ENCODE measurements at regions of chr6 and their contacts with region 1.

Region 1: DNA sequence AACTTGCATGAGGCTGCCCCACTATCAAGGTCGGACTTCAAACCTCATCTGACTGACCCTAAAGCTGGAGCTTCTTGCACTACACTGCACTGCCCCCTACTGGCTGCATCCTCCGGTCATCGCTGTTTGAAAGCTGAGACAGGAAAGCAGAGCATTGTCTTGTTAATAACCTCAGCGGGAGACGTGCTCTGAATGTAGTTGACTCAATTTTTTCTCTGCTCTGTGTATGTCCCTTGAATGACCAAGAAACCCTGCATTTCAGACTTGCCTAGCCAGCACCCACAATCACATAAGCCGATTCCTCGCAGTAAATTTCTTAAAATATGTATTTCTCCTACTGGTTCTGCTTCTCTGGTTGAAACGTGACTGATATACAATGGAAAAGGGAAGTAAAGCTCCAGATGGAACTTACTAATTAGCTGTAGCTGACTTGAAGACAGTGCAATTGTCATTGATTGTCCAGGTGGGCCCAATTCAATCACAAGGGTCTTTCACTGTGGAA is 27.8 kb downstream of the TCF21 start:
- DNase-seq: peak; percentile 21 to 79 (median 70)
- ATAC-seq: peak; percentile 52
- H3K4me3 ChIP-seq: no peak overlapping the region
- H3K4me3 Mint-ChIP-seq: no peak overlapping the region
- H3K27ac ChIP-seq: no peak overlapping the region
- H3K27ac Mint-ChIP-seq: no peak overlapping the region
- H3K4me1 ChIP-seq: peaks cover 5% of the 10 kb centered on the region
- H3K4me1 Mint-ChIP-seq: peaks cover 3% of the 10 kb centered on the region
- H3K27me3 ChIP-seq: no peaks in the 10 kb centered on the region
- H3K27me3 Mint-ChIP-seq: peaks cover 13% of the 10 kb centered on the region
- CTCF ChIP-seq: peak; percentile 71

Region 2: GRCh38 chr6:132820629-132821381 is 1095.9 kb before region 1 on chr6:
- CTCF ChIA-PET with region 1: no interaction called
- POLR2A ChIA-PET with region 1: no interaction called
- intact Hi-C with region 1: loop called in 1 of 2 experiments (anchors 10 kb)
- DNase-seq: peak in 1 of 9 experiments; percentile 16
- ATAC-seq: no peak
- H3K4me3 ChIP-seq: no peak overlapping the region
- H3K4me3 Mint-ChIP-seq: no peak overlapping the region
- H3K27ac ChIP-seq: peak overlapping the region in 1 of 2 experiments; percentile 44
- H3K27ac Mint-ChIP-seq: peak overlapping the region; percentile 81
- H3K4me1 ChIP-seq: peaks cover 25% of the 10 kb centered on the region
- H3K4me1 Mint-ChIP-seq: peaks cover 55% of the 10 kb centered on the region
- H3K27me3 ChIP-seq: no peaks in the 10 kb centered on the region
- H3K27me3 Mint-ChIP-seq: no peaks in the 10 kb centered on the region
- CTCF ChIP-seq: no peak

Region 3: GRCh38 chr6:132962936-132963868 is 953.5 kb before region 1 on chr6:
- CTCF ChIA-PET with region 1: no interaction called
- POLR2A ChIA-PET with region 1: no interaction called
- intact Hi-C with region 1: loop called in 1 of 2 experiments (anchors 5 kb)
- DNase-seq: peak; percentile 5 to 58 (median 38)
- ATAC-seq: peak; percentile 44
- H3K4me3 ChIP-seq: no peak overlapping the region
- H3K4me3 Mint-ChIP-seq: no peak overlapping the region
- H3K27ac ChIP-seq: no peak overlapping the region
- H3K27ac Mint-ChIP-seq: no peak overlapping the region
- H3K4me1 ChIP-seq: no peaks in the 10 kb centered on the region
- H3K4me1 Mint-ChIP-seq: no peaks in the 10 kb centered on the region
- H3K27me3 ChIP-seq: no peaks in the 10 kb centered on the region
- H3K27me3 Mint-ChIP-seq: peaks cover 29% of the 10 kb centered on the region
- CTCF ChIP-seq: peak; percentile 70

Region 4: DNA sequence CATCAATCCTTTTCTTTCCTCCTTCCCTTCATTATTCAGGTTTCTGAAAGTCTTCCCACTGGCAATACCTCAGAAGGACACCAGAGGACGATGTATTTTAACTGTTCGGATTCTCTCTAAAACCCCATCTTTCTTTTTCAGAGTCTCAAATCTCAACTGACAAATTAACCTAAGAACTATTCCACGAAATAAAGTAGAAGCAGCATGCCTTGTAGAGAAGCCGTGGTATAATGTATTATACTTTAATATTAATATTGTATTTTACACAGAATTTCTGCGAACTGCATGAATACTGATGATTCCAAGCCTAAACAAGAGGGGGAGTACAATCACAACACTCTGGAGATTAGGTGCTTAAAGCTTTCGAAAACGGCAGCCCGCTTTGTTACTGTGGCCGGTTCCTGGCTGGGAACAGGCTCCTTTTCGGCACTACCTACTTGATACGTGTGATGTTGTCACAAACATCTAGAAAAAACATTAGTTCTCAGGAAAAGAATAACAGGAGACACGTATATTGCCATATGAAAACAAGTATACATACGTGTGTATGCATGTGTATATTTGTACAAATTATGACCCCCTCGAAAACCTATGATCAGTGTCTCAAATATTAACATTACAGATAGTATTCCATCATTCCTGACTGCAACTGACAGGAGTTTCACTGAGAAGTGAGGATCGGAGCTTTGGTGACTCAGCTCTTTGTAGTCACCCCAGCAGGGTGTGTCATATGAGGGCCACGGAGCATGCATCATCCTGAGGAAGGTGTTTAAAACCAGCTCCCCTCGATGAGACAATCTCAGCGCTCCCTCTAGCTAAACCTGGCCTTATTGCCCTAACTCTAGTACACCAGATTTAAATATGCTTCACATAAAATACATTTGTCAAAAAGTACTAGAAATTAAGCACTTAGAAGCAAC is 347.5 kb before region 1 on chr6:
- CTCF ChIA-PET with region 1: interaction called, 5 read pairs
- POLR2A ChIA-PET with region 1: no interaction called
- intact Hi-C with region 1: loop called (anchors 5 kb)
- DNase-seq: peak in 2 of 9 experiments; percentile 12 to 33
- ATAC-seq: no peak
- H3K4me3 ChIP-seq: no peak overlapping the region
- H3K4me3 Mint-ChIP-seq: peak overlapping the region; percentile 44
- H3K27ac ChIP-seq: no peak overlapping the region
- H3K27ac Mint-ChIP-seq: no peak overlapping the region
- H3K4me1 ChIP-seq: no peaks in the 10 kb centered on the region
- H3K4me1 Mint-ChIP-seq: peaks cover 6% of the 10 kb centered on the region
- H3K27me3 ChIP-seq: peaks cover 0 to 3% of the 10 kb centered on the region in 2 experiments
- H3K27me3 Mint-ChIP-seq: peaks cover 25% of the 10 kb centered on the region
- CTCF ChIP-seq: peak; percentile 43

Region 5: GRCh38 chr6:133837801-133838349 is 78.8 kb before region 1 on chr6:
- CTCF ChIA-PET with region 1: interaction called, 10 read pairs
- POLR2A ChIA-PET with region 1: no interaction called
- intact Hi-C with region 1: loop called (anchors 1 to 5 kb)
- DNase-seq: peak; percentile 9 to 63 (median 46)
- ATAC-seq: peak; percentile 66
- H3K4me3 ChIP-seq: peak overlapping the region; percentile 37 to 41
- H3K4me3 Mint-ChIP-seq: peak overlapping the region; percentile 72
- H3K27ac ChIP-seq: no peak overlapping the region
- H3K27ac Mint-ChIP-seq: no peak overlapping the region
- H3K4me1 ChIP-seq: no peaks in the 10 kb centered on the region
- H3K4me1 Mint-ChIP-seq: peaks cover 8% of the 10 kb centered on the region
- H3K27me3 ChIP-seq: peaks cover 0 to 9% of the 10 kb centered on the region in 2 experiments
- H3K27me3 Mint-ChIP-seq: peaks cover 40% of the 10 kb centered on the region
- CTCF ChIP-seq: peak; percentile 49

Region 6: GRCh38 chr6:134029495-134030455 is 113.1 kb after region 1 on chr6:
- CTCF ChIA-PET with region 1: no interaction called
- POLR2A ChIA-PET with region 1: no interaction called
- intact Hi-C with region 1: no loop called
- DNase-seq: no peak
- ATAC-seq: no peak
- H3K4me3 ChIP-seq: no peak overlapping the region
- H3K4me3 Mint-ChIP-seq: no peak overlapping the region
- H3K27ac ChIP-seq: no peak overlapping the region
- H3K27ac Mint-ChIP-seq: no peak overlapping the region
- H3K4me1 ChIP-seq: no peaks in the 10 kb centered on the region
- H3K4me1 Mint-ChIP-seq: peaks cover 3% of the 10 kb centered on the region
- H3K27me3 ChIP-seq: no peaks in the 10 kb centered on the region
- H3K27me3 Mint-ChIP-seq: no peaks in the 10 kb centered on the region
- CTCF ChIP-seq: no peak

Region 7: DNA sequence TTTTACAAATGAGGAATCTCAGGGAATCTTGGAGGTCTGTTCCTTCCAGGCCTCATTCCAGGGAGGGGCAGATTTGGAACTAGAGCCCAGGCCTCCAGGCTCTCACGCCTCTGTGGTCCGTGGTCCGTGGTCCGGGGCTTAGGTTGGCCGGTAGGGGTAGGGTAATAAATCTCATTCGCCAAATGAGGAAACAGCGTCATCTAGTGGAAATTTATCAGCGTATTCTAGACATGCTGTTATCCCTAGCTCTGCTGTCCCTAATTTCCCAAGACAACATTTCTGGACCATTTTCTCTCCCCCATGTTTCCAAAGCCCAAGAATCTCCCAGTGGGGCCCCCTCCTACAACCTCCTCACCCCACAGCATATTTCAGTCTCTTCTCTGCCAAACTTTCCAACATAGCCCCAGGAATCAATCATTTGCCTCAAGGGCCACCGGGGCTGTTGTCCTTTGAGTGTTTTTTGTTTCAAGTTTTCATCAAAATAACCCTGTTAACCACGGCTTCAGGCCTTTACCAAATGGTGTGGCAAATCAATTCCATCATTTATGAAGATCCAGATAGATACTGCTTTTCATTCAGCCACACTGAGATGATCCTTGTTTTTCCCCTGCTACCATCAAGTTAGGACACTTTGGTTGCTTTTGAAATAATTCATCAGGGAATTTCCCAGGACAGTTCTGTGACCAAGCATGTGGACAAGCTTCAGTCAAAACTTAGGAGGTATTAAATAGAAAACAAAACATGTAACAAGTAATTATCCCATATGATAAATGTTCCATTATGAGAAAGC is 906.4 kb after region 1 on chr6:
- CTCF ChIA-PET with region 1: no interaction called
- POLR2A ChIA-PET with region 1: no interaction called
- intact Hi-C with region 1: loop called in 1 of 2 experiments (anchors 10 kb)
- DNase-seq: peak in 4 of 9 experiments; percentile 22 to 74 (median 58)
- ATAC-seq: peak; percentile 61
- H3K4me3 ChIP-seq: no peak overlapping the region
- H3K4me3 Mint-ChIP-seq: no peak overlapping the region
- H3K27ac ChIP-seq: no peak overlapping the region
- H3K27ac Mint-ChIP-seq: no peak overlapping the region
- H3K4me1 ChIP-seq: no peaks in the 10 kb centered on the region
- H3K4me1 Mint-ChIP-seq: peaks cover 4% of the 10 kb centered on the region
- H3K27me3 ChIP-seq: no peaks in the 10 kb centered on the region
- H3K27me3 Mint-ChIP-seq: peaks cover 6% of the 10 kb centered on the region
- CTCF ChIP-seq: peak; percentile 76